ENCODE measurements at regions of chr2 and their contacts with region 1.

Region 1: DNA sequence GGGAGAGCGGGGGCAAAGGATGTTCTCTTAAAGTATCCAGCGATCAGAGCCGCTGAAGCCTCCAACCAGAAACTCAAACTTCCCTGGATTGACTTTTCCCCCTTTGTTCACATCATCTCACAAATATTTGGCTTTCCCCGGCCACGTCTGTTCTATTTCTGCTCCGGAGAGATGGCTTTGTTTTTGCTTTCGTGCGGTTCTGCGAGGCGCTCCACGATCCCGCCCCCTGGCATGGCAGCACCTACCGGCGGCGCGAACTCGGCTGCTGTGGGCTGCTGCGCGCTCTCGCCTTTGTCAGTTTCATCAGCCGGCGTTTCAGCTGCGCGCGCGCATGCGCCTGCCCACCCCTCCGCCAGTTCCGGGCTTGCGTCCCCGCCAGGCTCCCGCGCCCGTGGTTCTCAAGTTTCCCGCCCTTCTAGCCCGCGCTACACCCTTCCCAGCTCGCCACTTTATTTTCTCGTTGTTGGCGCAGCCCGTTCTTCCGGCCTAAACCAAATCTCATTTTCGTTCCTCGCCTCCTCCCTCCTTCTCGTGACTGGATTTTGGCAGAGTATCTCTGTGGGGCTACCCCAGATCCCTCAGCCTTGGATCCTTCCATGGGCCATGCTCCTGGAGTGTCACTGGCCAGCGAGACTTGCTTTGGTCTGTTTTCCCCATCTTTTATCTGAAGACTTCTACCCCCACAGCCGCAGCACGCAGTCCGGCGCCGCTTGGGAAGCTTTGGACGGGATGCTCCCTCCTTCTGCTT is 98.0 kb downstream of the INSIG2 start:
- DNase-seq: peak; percentile 54 to 95
- H3K4me3 ChIP-seq: peak overlapping the region; percentile 71 to 75
- H3K27ac ChIP-seq: peak overlapping the region; percentile 91 to 94
- H3K4me1 ChIP-seq: peaks cover 0 to 3% of the 10 kb centered on the region in 2 donors
- H3K27me3 ChIP-seq: no peaks in the 10 kb centered on the region
- CTCF ChIP-seq: no peak

Region 2: DNA sequence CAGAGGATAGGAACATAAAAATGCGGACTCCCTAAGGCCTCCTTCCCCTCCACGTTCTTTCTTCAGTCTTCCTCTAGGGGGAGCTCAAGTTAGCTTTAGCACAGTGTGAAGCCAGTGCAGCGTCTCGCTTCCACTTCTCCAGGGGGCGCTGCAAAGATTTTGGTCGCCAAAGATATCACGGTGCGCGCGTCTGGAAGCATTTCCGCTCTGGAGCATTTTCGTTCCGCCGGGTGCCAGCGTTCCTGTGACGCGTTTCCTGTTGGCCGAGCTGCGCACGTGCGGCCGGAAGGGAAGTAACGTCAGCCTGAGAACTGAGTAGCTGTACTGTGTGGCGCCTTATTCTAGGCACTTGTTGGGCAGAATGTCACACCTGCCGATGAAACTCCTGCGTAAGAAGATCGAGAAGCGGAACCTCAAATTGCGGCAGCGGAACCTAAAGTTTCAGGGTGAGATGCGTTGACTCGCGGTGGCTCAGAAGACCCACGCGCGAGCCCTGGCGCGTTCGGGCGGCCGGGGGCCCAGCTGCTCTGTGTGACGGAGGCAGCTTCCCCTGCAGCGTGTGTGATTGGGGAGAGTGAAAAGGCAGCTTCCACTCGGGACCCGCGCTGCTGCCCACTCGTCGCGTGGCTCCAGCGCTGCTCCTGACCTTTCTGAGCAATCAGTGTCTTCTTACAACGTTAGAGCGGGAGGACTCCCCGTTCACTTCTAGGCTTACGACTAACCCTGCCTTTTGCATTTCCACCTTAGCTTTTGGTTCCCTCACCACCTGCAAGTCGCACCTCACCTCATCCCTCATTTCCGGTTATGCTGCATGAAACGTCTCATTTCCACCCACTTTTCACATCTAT is 371.6 kb before region 1 on chr2 and contains the start of gene DDX18:
- intact Hi-C with region 1: loop called (anchors 2 kb)
- DNase-seq: peak; percentile 88 to 99
- H3K4me3 ChIP-seq: peak within 1 kb of the TSS; percentile 82 to 97
- H3K27ac ChIP-seq: peak within 1 kb of the TSS; percentile 93 to 94
- H3K4me1 ChIP-seq: peaks cover 4 to 18% of the 10 kb centered on the region in 2 donors
- H3K27me3 ChIP-seq: no peaks in the 10 kb centered on the region
- CTCF ChIP-seq: peak; percentile 91 to 99 (median 98)
- total RNA-seq, gene DDX18: 20.5 TPM

Region 3: GRCh38 chr2:118013724-118014491 is 172.4 kb before region 1 on chr2 and contains the start of gene CCDC93:
- intact Hi-C with region 1: loop called (anchors 10 kb)
- DNase-seq: peak; percentile 24 to 82
- H3K4me3 ChIP-seq: peak within 1 kb of the TSS; percentile 75 to 93
- H3K27ac ChIP-seq: peak within 1 kb of the TSS; percentile 79 to 90
- H3K4me1 ChIP-seq: peaks cover 3 to 4% of the 10 kb centered on the region in 2 donors
- H3K27me3 ChIP-seq: no peaks in the 10 kb centered on the region
- CTCF ChIP-seq: no peak
- total RNA-seq, gene CCDC93: 6.3 TPM

Region 4: GRCh38 chr2:118088051-118089024 is 97.9 kb before region 1 on chr2 and contains the start of gene INSIG2:
- intact Hi-C with region 1: loop called (anchors 1 kb)
- DNase-seq: peak; percentile 77 to 95
- H3K4me3 ChIP-seq: peak within 1 kb of the TSS; percentile 79 to 90
- H3K27ac ChIP-seq: peak within 1 kb of the TSS; percentile 48 to 69
- H3K4me1 ChIP-seq: peaks cover 0 to 23% of the 10 kb centered on the region in 2 donors
- H3K27me3 ChIP-seq: no peaks in the 10 kb centered on the region
- CTCF ChIP-seq: peak in 1 of 3 experiments; percentile 14
- total RNA-seq, gene INSIG2: 64.2 TPM

Region 5: GRCh38 chr2:118249531-118249930 is 63.2 kb after region 1 on chr2:
- intact Hi-C with region 1: no loop called
- DNase-seq: no peak
- H3K4me3 ChIP-seq: no peak overlapping the region
- H3K27ac ChIP-seq: no peak overlapping the region
- H3K4me1 ChIP-seq: no peaks in the 10 kb centered on the region
- H3K27me3 ChIP-seq: no peaks in the 10 kb centered on the region
- CTCF ChIP-seq: no peak

Region 6: GRCh38 chr2:119487434-119488244 is 1301.4 kb after region 1 on chr2:
- intact Hi-C with region 1: loop called (anchors 10 kb)
- DNase-seq: peak in 1 of 2 donors; percentile 37
- H3K4me3 ChIP-seq: no peak overlapping the region
- H3K27ac ChIP-seq: peak overlapping the region in 1 of 2 donors; percentile 66
- H3K4me1 ChIP-seq: peaks cover 35 to 38% of the 10 kb centered on the region in 2 donors
- H3K27me3 ChIP-seq: no peaks in the 10 kb centered on the region
- CTCF ChIP-seq: no peak

Measured in ascending aorta (tissue), 2 donors.